Aorta (tissue), 5 donors: ENCODE measurements at regions of chr1 and their contacts with region 1.

Region 1: GRCh38 chr1:183023601-183024316 is 539 bp downstream of the LAMC1 start:
- DNase-seq: peak; percentile 62 to 83
- ATAC-seq: peak; percentile 31
- H3K4me3 ChIP-seq: peak overlapping the region; percentile 77 to 85
- H3K27ac ChIP-seq: peak overlapping the region; percentile 60 to 98
- H3K4me1 ChIP-seq: peaks cover 0 to 4% of the 10 kb centered on the region in 2 donors
- H3K27me3 ChIP-seq: no peaks in the 10 kb centered on the region

Region 2: DNA sequence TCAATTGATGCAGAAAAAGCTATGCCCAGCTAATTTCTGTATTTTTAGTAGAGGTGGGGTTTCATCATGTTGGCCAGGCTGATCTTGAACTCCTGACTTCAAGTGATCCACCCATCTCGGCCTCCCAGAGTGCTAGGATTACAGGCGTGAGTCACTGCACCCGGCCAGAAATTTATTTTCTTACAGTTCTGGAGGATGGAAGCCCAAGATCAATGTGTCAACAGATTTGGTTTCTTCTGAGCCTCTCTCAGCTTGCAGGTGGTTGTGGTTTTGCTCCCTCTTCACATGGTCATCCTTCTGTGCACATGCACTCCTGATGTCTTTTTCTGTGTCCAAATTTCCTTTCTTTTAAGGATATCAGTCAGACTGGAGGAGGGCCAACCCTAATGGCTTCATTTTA is 106.4 kb before region 1 on chr1:
- intact Hi-C with region 1: no loop called
- DNase-seq: no peak
- ATAC-seq: no peak
- H3K4me3 ChIP-seq: no peak overlapping the region
- H3K27ac ChIP-seq: no peak overlapping the region
- H3K4me1 ChIP-seq: no peaks in the 10 kb centered on the region
- H3K27me3 ChIP-seq: no peaks in the 10 kb centered on the region

Region 3: DNA sequence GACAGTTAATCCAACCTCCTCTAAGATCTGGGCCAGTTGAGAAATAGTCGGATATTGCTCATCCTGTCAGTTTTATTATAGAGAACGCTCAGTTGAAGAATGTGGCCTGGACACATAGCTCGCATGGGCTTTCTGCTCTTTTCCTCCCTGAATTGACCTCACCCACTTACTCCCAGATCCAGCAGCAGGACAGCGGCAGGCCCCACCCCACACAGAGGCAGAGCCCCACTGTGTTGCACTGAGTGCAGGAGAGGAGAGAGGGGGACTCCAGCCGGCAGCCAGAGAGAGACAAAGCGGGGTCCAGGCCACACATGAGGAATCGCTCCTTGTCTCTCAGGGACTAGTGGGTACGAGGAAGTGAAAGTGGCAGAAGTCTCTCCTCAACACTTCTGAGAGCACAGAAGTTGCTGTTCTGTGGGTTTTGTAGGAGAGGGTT is 78.1 kb after region 1 on chr1:
- intact Hi-C with region 1: loop called (anchors 5 to 10 kb)
- DNase-seq: no peak
- ATAC-seq: no peak
- H3K4me3 ChIP-seq: no peak overlapping the region
- H3K27ac ChIP-seq: no peak overlapping the region
- H3K4me1 ChIP-seq: peaks cover 3 to 18% of the 10 kb centered on the region in 2 donors
- H3K27me3 ChIP-seq: no peaks in the 10 kb centered on the region

Region 4: DNA sequence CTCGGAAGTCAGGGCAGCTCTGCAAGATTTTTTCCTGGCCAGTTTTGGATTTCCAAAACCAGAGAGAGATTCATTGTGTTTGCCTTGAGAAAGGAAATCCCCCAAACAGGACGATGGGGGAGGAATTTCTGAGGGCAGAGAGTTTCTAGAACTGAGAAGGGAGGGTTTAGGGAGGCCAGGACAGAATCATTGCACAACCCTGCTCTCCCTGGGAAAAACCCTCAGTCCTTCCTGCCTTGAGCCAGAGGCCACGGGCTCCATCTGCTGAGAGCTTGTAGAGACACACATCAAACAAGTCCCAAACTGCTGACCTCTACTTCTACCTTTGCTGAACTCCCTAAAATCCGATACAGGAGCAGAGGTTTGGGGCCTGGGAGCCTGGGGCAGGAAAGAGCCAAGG is 294.7 kb after region 1 on chr1:
- intact Hi-C with region 1: loop called in 1 of 2 experiments (anchors 5 kb)
- DNase-seq: peak; percentile 85 to 89
- ATAC-seq: peak; percentile 94
- H3K4me3 ChIP-seq: no peak overlapping the region
- H3K27ac ChIP-seq: peak overlapping the region; percentile 11 to 53
- H3K4me1 ChIP-seq: no peaks in the 10 kb centered on the region
- H3K27me3 ChIP-seq: no peaks in the 10 kb centered on the region

Region 5: GRCh38 chr1:183628537-183628936 is 604.8 kb after region 1 on chr1:
- intact Hi-C with region 1: loop called in 1 of 2 experiments (anchors 5 kb)
- DNase-seq: no peak
- ATAC-seq: no peak
- H3K4me3 ChIP-seq: no peak overlapping the region
- H3K27ac ChIP-seq: no peak overlapping the region
- H3K4me1 ChIP-seq: peaks cover 2 to 6% of the 10 kb centered on the region in 2 donors
- H3K27me3 ChIP-seq: no peaks in the 10 kb centered on the region